ENCODE measurements at regions of chr13 and their contacts with region 1.

Region 1: GRCh38 chr13:46149272-46150133 is 32.5 kb downstream of the LCP1 start:
- DNase-seq: no peak
- H3K4me3 ChIP-seq: no peak overlapping the region
- H3K27ac ChIP-seq: no peak overlapping the region
- H3K4me1 ChIP-seq: no peaks in the 10 kb centered on the region
- H3K27me3 ChIP-seq: no peaks in the 10 kb centered on the region
- CTCF ChIP-seq: no peak
- POLR2A ChIP-seq: no peak

Region 2: GRCh38 chr13:46295491-46296114 is 146.1 kb after region 1 on chr13:
- intact Hi-C with region 1: loop called in 1 of 2 experiments (anchors 10 kb)
- DNase-seq: peak in 4 of 7 donors; percentile 39 to 64 (median 50)
- H3K4me3 ChIP-seq: no peak overlapping the region
- H3K27ac ChIP-seq: peak overlapping the region in 2 of 5 donors; percentile 57 to 87
- H3K4me1 ChIP-seq: peaks cover 7 to 18% of the 10 kb centered on the region in 2 donors
- H3K27me3 ChIP-seq: no peaks in the 10 kb centered on the region
- CTCF ChIP-seq: no peak
- POLR2A ChIP-seq: no peak

Region 3: GRCh38 chr13:46354156-46355091 is 204.9 kb after region 1 on chr13:
- intact Hi-C with region 1: no loop called
- DNase-seq: no peak
- H3K4me3 ChIP-seq: no peak overlapping the region
- H3K27ac ChIP-seq: peak overlapping the region in 1 of 5 donors; percentile 74
- H3K4me1 ChIP-seq: no peaks in the 10 kb centered on the region
- H3K27me3 ChIP-seq: no peaks in the 10 kb centered on the region
- CTCF ChIP-seq: no peak
- POLR2A ChIP-seq: no peak